B cell (primary cell): ENCODE measurements at regions of chr10 and their contacts with region 1.

Region 1: GRCh38 chr10:130110246-130111112 is at the start of gene C10orf143:
- DNase-seq: peak; percentile 99
- ATAC-seq: peak; percentile 77
- H3K4me3 ChIP-seq: peak within 1 kb of the TSS; percentile 91 to 98 (median 95)
- H3K4me3 Mint-ChIP-seq: peak within 1 kb of the TSS; percentile 99
- H3K27ac ChIP-seq: peak within 1 kb of the TSS; percentile 87 to 96
- H3K27ac Mint-ChIP-seq: peak within 1 kb of the TSS; percentile 99
- H3K4me1 ChIP-seq: peaks cover 21 to 23% of the 10 kb centered on the region in 2 donors
- H3K4me1 Mint-ChIP-seq: peaks cover 42% of the 10 kb centered on the region
- H3K27me3 ChIP-seq: no peaks in the 10 kb centered on the region
- H3K27me3 Mint-ChIP-seq: no peaks in the 10 kb centered on the region
- CTCF ChIP-seq: no peak
- total RNA-seq, gene C10orf143: 9.1 and 12.3 TPM in 2 replicates

Region 2: GRCh38 chr10:128211953-128212727 is 1898.3 kb before region 1 on chr10:
- CTCF ChIA-PET with region 1: no interaction called
- POLR2A ChIA-PET with region 1: no interaction called
- intact Hi-C with region 1: loop called (anchors 5 kb)
- DNase-seq: peak; percentile 89
- ATAC-seq: peak; percentile 87
- H3K4me3 ChIP-seq: no peak overlapping the region
- H3K4me3 Mint-ChIP-seq: peak overlapping the region; percentile 82
- H3K27ac ChIP-seq: no peak overlapping the region
- H3K27ac Mint-ChIP-seq: peak overlapping the region; percentile 78
- H3K4me1 ChIP-seq: peaks cover 8 to 12% of the 10 kb centered on the region in 2 donors
- H3K4me1 Mint-ChIP-seq: peaks cover 12% of the 10 kb centered on the region
- H3K27me3 ChIP-seq: peaks cover 0 to 13% (median 0%) of the 10 kb centered on the region in 4 experiments
- H3K27me3 Mint-ChIP-seq: peaks cover 23% of the 10 kb centered on the region
- CTCF ChIP-seq: peak; percentile 89

Region 3: GRCh38 chr10:129466703-129467358 is 643.6 kb before region 1 on chr10 and contains the start of gene MGMT:
- CTCF ChIA-PET with region 1: no interaction called
- POLR2A ChIA-PET with region 1: interaction called, 5 read pairs
- intact Hi-C with region 1: loop called (anchors 1 kb)
- DNase-seq: peak; percentile 94
- ATAC-seq: peak; percentile 99
- H3K4me3 ChIP-seq: peak within 1 kb of the TSS; percentile 6 to 85 (median 82)
- H3K4me3 Mint-ChIP-seq: peak within 1 kb of the TSS; percentile 89
- H3K27ac ChIP-seq: peak within 1 kb of the TSS; percentile 69 to 81
- H3K27ac Mint-ChIP-seq: peak within 1 kb of the TSS; percentile 85
- H3K4me1 ChIP-seq: peaks cover 13 to 18% of the 10 kb centered on the region in 2 donors
- H3K4me1 Mint-ChIP-seq: peaks cover 22% of the 10 kb centered on the region
- H3K27me3 ChIP-seq: no peaks in the 10 kb centered on the region
- H3K27me3 Mint-ChIP-seq: no peaks in the 10 kb centered on the region
- CTCF ChIP-seq: no peak
- total RNA-seq, gene MGMT: 84.5 and 87.7 TPM in 2 replicates

Region 4: DNA sequence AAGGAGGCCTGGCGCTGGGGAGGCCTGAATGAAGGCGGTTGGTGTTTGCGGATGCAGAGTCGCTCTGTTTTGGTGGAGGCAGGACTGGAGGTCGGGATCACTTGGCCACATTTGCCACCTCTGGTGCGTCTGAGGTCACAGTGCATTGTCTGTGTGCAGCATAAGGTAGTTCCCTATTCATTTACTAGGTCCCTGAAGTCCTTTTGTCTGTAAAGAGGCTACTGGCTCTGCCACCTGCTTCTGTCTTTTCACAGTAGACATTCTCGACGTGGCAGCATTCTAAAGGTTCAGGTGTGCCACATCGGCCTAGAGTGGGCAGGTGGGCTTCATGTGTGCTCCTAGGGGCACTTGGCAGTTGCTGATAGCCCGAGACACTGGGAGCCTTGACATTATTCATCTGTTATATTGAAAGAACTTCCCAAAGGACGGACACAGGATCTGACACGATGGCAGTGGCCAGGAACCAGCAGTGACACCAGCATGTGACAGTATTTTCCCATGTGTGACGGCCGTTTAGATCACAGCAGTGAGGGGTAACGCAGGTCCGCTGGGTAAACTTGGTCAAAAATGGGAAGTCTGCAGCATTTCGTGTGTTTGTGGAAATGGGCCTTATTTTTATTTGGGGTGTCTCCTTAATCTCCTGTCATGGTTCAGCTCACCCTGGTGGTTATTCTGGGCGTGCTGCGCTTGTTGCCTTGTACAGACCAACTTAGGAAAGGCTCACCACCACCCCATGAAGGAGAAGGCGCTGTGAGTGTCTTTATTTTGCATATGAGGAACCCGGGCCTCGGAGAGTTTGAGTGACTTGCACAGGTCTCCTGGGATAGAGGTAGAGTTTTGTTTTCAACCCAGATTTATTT is 637.6 kb before region 1 on chr10:
- CTCF ChIA-PET with region 1: no interaction called
- POLR2A ChIA-PET with region 1: no interaction called
- intact Hi-C with region 1: loop called (anchors 1 kb)
- DNase-seq: peak; percentile 77
- ATAC-seq: peak; percentile 83
- H3K4me3 ChIP-seq: peak overlapping the region in 2 of 5 experiments; percentile 11 to 38
- H3K4me3 Mint-ChIP-seq: peak overlapping the region; percentile 87
- H3K27ac ChIP-seq: peak overlapping the region; percentile 84 to 90
- H3K27ac Mint-ChIP-seq: peak overlapping the region; percentile 96
- H3K4me1 ChIP-seq: peaks cover 28 to 33% of the 10 kb centered on the region in 2 donors
- H3K4me1 Mint-ChIP-seq: peaks cover 63% of the 10 kb centered on the region
- H3K27me3 ChIP-seq: no peaks in the 10 kb centered on the region
- H3K27me3 Mint-ChIP-seq: no peaks in the 10 kb centered on the region
- CTCF ChIP-seq: no peak

Region 5: DNA sequence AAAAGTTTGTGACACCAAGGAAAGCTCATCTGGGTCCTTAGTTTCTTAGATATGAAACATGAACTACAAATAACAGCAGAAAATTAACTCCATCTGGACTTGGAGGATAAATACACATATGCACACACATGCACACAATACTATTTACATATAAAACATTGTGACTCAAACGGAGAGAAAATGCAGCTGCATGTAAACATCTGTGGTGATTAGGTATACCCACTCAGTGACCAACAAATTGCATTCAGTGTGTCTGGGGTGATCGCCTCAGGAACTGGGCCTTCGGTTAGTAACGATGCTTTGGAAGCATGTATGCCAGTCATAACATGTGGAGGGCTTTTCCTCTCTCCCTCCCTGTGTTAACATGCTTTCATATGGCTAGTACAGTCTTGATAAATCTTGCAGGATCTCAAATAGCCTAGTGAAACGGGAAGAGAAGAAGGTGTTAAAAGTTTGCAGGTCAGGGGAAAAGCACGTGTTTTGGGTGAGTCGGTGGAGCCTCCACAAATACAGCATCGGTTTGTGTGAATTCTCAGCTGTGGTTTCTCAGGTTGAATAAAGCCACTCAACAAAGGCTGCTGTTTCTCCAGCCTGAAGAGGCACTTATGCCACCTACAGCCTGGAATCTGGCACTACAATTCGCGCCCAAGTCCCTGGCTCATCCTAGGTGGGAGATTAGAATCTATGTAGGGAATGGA is 17.0 kb after region 1 on chr10:
- CTCF ChIA-PET with region 1: interaction called, 49 read pairs
- POLR2A ChIA-PET with region 1: interaction called, 4 read pairs
- intact Hi-C with region 1: no loop called
- DNase-seq: peak; percentile 64
- ATAC-seq: peak; percentile 70
- H3K4me3 ChIP-seq: no peak overlapping the region
- H3K4me3 Mint-ChIP-seq: no peak overlapping the region
- H3K27ac ChIP-seq: no peak overlapping the region
- H3K27ac Mint-ChIP-seq: no peak overlapping the region
- H3K4me1 ChIP-seq: peaks cover 3 to 4% of the 10 kb centered on the region in 2 donors
- H3K4me1 Mint-ChIP-seq: peaks cover 5% of the 10 kb centered on the region
- H3K27me3 ChIP-seq: peaks cover 0 to 28% (median 12%) of the 10 kb centered on the region in 4 experiments
- H3K27me3 Mint-ChIP-seq: peaks cover 52% of the 10 kb centered on the region
- CTCF ChIP-seq: peak; percentile 80

Region 6: GRCh38 chr10:130136226-130137089 is 26.0 kb after region 1 on chr10 and contains the start of gene GLRX3:
- CTCF ChIA-PET with region 1: interaction called, 49 read pairs
- POLR2A ChIA-PET with region 1: interaction called, 45 read pairs
- intact Hi-C with region 1: no loop called
- DNase-seq: peak; percentile 93
- ATAC-seq: peak; percentile 91
- H3K4me3 ChIP-seq: peak within 1 kb of the TSS in 4 of 5 experiments; percentile 44 to 91 (median 74)
- H3K4me3 Mint-ChIP-seq: peak within 1 kb of the TSS; percentile 95
- H3K27ac ChIP-seq: peak within 1 kb of the TSS; percentile 4 to 79
- H3K27ac Mint-ChIP-seq: peak within 1 kb of the TSS; percentile 89
- H3K4me1 ChIP-seq: peaks cover 35 to 36% of the 10 kb centered on the region in 2 donors
- H3K4me1 Mint-ChIP-seq: peaks cover 38% of the 10 kb centered on the region
- H3K27me3 ChIP-seq: peaks cover 0 to 10% (median 0%) of the 10 kb centered on the region in 4 experiments
- H3K27me3 Mint-ChIP-seq: peaks cover 13% of the 10 kb centered on the region
- CTCF ChIP-seq: no peak
- total RNA-seq, gene GLRX3: 45.4 and 47.6 TPM in 2 replicates

Region 7: GRCh38 chr10:131900350-131901146 is 1790.1 kb after region 1 on chr10 and contains the start of gene PPP2R2D:
- CTCF ChIA-PET with region 1: no interaction called
- POLR2A ChIA-PET with region 1: no interaction called
- intact Hi-C with region 1: loop called (anchors 10 kb)
- DNase-seq: peak; percentile 98
- ATAC-seq: peak; percentile 90
- H3K4me3 ChIP-seq: peak within 1 kb of the TSS; percentile 61 to 89 (median 69)
- H3K4me3 Mint-ChIP-seq: peak within 1 kb of the TSS; percentile 89
- H3K27ac ChIP-seq: peak within 1 kb of the TSS; percentile 71 to 85
- H3K27ac Mint-ChIP-seq: peak within 1 kb of the TSS; percentile 86
- H3K4me1 ChIP-seq: peaks cover 26 to 27% of the 10 kb centered on the region in 2 donors
- H3K4me1 Mint-ChIP-seq: peaks cover 35% of the 10 kb centered on the region
- H3K27me3 ChIP-seq: peaks cover 0 to 13% (median 5%) of the 10 kb centered on the region in 4 experiments
- H3K27me3 Mint-ChIP-seq: peaks cover 19% of the 10 kb centered on the region
- CTCF ChIP-seq: no peak
- total RNA-seq, gene PPP2R2D: 40.4 and 45.6 TPM in 2 replicates